Breast epithelium (tissue), 4 donors: ENCODE measurements at regions of chr7 and their contacts with region 1.

Region 1: GRCh38 chr7:141014524-141015395 is at the start of gene MRPS33:
- DNase-seq: peak; percentile 90 to 94
- H3K4me3 ChIP-seq: peak within 1 kb of the TSS; percentile 51 to 71 (median 67)
- H3K27ac ChIP-seq: peak within 1 kb of the TSS; percentile 90 to 93
- H3K4me1 ChIP-seq: peaks cover 0 to 4% of the 10 kb centered on the region in 2 donors
- H3K27me3 ChIP-seq: no peaks in the 10 kb centered on the region
- CTCF ChIP-seq: no peak
- POLR2A ChIP-seq: peak; percentile 67
- total RNA-seq, gene MRPS33: 17.4 to 23.4 (median 21.8) TPM

Region 2: GRCh38 chr7:140810830-140811556 is 203.8 kb before region 1 on chr7:
- intact Hi-C with region 1: loop called (anchors 5 kb)
- DNase-seq: peak in 1 of 2 donors; percentile 35
- H3K4me3 ChIP-seq: no peak overlapping the region
- H3K27ac ChIP-seq: no peak overlapping the region
- H3K4me1 ChIP-seq: no peaks in the 10 kb centered on the region
- H3K27me3 ChIP-seq: no peaks in the 10 kb centered on the region
- CTCF ChIP-seq: peak; percentile 42 to 67 (median 62)
- POLR2A ChIP-seq: no peak

Region 3: DNA sequence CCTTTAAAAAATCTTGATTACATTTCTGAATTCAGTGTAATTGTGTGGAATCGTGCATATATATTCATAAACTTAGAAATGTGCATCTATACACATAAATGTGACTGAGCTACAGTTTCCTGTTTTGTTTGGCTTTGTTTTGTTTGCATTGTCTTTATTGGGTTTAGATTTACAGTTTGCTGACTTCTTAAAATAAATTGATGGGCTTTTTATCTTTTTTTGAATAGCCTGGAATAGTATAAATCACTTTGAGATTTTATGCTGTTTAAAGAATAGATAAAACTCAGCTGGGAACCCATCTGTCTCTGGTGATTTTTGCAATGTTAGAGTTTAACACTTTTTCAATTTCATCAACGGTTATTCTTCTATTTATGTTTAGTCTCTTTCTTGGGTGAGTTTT is 68.8 kb before region 1 on chr7:
- intact Hi-C with region 1: no loop called
- DNase-seq: no peak
- H3K4me3 ChIP-seq: no peak overlapping the region
- H3K27ac ChIP-seq: no peak overlapping the region
- H3K4me1 ChIP-seq: no peaks in the 10 kb centered on the region
- H3K27me3 ChIP-seq: no peaks in the 10 kb centered on the region
- CTCF ChIP-seq: no peak
- POLR2A ChIP-seq: no peak

Region 4: DNA sequence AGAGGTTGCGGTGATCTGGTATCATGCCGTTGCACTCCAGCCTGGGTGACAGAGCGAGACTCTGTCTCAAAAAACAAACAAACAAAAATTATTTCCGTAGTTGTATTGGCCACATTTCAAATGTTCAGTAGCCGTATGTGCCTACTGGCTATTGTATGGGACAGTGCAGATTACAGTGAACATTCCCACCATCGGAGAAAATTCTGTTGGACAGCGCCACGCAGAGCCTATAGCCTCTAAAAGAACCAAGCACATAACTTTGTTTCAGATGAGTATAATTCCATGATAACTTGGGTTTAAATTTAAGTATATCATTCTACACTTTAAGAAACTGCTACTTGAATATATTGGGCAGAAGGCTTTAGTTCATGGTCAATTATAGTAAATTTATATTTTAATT is 64.5 kb after region 1 on chr7:
- intact Hi-C with region 1: no loop called
- DNase-seq: no peak
- H3K4me3 ChIP-seq: no peak overlapping the region
- H3K27ac ChIP-seq: no peak overlapping the region
- H3K4me1 ChIP-seq: no peaks in the 10 kb centered on the region
- H3K27me3 ChIP-seq: peaks cover 0 to 9% of the 10 kb centered on the region in 2 donors
- CTCF ChIP-seq: no peak
- POLR2A ChIP-seq: no peak